MCF 10A (cell line): ENCODE measurements at regions of chr20 and their contacts with region 1.

Region 1: DNA sequence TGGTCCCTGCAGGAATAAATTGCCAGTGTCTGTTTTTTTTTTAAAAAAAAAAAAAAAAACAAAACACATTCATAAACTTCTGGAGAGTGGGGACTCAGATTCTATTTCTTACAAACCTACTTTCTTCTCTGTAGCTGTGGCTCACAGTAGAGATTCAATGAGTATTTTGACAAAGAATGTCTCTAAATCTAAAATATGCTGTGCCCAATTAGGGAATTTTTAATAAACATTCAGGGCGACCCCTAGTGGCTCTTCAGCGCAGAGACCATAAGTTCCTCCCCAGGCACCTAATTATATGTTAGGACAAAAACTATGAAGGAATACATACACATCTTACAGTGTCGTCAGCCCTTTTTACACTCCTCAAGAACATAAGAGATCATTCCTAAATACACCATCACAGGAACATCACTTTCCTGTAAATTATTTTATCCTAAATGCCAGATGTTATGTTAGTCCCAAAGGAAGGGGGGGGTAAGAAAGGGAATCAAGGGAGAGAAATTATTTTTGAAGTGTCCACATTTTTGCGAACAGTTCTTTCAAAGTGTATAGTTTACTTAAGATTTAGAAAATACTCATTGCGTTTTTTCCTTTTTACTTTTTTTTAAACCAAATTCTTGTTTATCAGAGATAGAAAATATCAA is 21.8 kb upstream of the NAA20 start:
- DNase-seq: peak; percentile 70
- H3K4me3 Mint-ChIP-seq: no peak overlapping the region
- H3K27ac Mint-ChIP-seq: peak overlapping the region; percentile 86
- H3K4me1 Mint-ChIP-seq: peaks cover 28% of the 10 kb centered on the region
- H3K27me3 Mint-ChIP-seq: no peaks in the 10 kb centered on the region
- CTCF ChIP-seq: peak; percentile 78

Region 2: GRCh38 chr20:19815553-19815991 is 179.8 kb before region 1 on chr20:
- CTCF ChIA-PET with region 1: interaction called, 7 read pairs
- POLR2A ChIA-PET with region 1: interaction called, 23 read pairs
- intact Hi-C with region 1: no loop called
- DNase-seq: peak; percentile 95
- H3K4me3 Mint-ChIP-seq: peak overlapping the region; percentile 44
- H3K27ac Mint-ChIP-seq: peak overlapping the region; percentile 90
- H3K4me1 Mint-ChIP-seq: peaks cover 20% of the 10 kb centered on the region
- H3K27me3 Mint-ChIP-seq: no peaks in the 10 kb centered on the region
- CTCF ChIP-seq: no peak

Region 3: GRCh38 chr20:19913927-19914614 is 81.3 kb before region 1 on chr20:
- CTCF ChIA-PET with region 1: interaction called, 9 read pairs
- POLR2A ChIA-PET with region 1: interaction called, 17 read pairs
- intact Hi-C with region 1: loop called (anchors 5 kb)
- DNase-seq: peak; percentile 94
- H3K4me3 Mint-ChIP-seq: no peak overlapping the region
- H3K27ac Mint-ChIP-seq: peak overlapping the region; percentile 82
- H3K4me1 Mint-ChIP-seq: peaks cover 46% of the 10 kb centered on the region
- H3K27me3 Mint-ChIP-seq: no peaks in the 10 kb centered on the region
- CTCF ChIP-seq: no peak

Region 4: DNA sequence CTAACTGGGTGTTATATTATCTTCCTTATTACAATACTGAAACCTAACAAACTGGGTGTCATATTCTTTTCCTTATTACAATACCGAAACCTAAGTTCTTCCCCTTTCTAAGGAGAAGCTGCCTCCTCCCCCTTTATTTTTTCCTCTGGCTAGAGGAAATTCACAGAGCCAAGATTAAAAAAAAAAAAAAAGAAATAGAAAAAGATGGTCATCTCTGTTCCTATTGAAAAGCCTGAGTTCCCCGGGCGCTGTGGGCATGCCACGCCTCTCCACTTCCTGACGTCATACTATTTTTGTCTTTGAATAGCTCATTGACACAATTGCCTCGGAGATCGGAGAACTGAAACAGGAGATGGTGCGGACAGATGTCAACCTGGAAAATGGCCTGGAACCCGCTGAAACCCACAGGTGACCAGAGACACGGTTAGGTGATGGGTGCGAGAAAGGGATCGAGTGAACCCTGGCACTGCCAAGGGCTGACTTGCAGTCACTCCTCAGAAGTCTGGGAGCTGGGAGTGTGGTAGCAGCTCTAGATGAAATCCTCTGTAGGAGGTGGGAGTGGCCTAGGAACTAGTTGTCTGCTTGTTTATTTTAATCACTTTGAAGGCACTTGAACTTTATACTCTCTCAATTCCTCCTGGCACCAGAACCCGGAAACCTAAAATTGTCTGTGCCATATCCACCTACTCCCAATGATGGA is 60.4 kb before region 1 on chr20:
- CTCF ChIA-PET with region 1: interaction called, 14 read pairs
- POLR2A ChIA-PET with region 1: interaction called, 41 read pairs
- intact Hi-C with region 1: loop called (anchors 2 kb)
- DNase-seq: peak; percentile 70
- H3K4me3 Mint-ChIP-seq: peak overlapping the region; percentile 69
- H3K27ac Mint-ChIP-seq: peak overlapping the region; percentile 71
- H3K4me1 Mint-ChIP-seq: peaks cover 15% of the 10 kb centered on the region
- H3K27me3 Mint-ChIP-seq: no peaks in the 10 kb centered on the region
- CTCF ChIP-seq: no peak

Region 5: GRCh38 chr20:19964289-19965263 is 30.8 kb before region 1 on chr20:
- CTCF ChIA-PET with region 1: interaction called, 6 read pairs
- POLR2A ChIA-PET with region 1: interaction called, 22 read pairs
- intact Hi-C with region 1: no loop called
- DNase-seq: peak; percentile 80
- H3K4me3 Mint-ChIP-seq: no peak overlapping the region
- H3K27ac Mint-ChIP-seq: peak overlapping the region; percentile 87
- H3K4me1 Mint-ChIP-seq: peaks cover 15% of the 10 kb centered on the region
- H3K27me3 Mint-ChIP-seq: no peaks in the 10 kb centered on the region
- CTCF ChIP-seq: no peak

Region 6: DNA sequence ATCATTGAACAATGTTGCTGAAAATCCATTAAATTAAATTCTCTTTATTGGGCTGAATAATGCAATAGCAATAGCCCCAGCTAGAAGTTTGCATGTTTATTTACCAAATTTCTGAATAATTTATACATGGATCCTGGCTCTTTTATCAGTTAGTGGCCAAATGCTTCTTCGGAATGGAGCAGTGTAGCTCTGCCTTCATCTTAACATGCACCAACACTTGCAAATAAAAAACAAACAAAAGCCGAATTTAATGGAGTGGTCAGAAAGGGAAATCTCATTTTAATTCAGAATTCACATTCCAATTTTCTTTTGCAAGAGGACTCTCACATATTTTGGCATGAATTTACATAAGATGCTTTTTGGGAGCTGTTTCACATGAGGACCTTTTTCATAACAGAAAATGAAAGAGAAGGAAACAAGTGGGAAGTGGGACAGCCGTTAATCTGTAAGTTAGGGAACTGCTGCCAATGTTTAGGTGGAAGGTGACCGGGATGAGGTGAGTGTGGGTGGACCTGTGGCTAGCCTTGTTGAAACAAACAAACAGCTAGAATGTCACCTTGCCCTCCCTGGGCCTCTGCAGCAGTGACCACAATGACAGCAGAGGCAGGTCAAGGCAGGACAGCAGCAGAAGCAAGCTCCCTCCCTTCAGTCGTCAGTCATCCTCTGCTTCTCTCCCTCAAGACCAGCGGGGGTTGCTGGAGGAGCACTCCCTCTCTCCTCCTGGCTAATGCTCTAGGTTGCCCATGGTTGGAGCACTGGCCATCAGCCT is 445.7 kb after region 1 on chr20:
- CTCF ChIA-PET with region 1: no interaction called
- POLR2A ChIA-PET with region 1: no interaction called
- intact Hi-C with region 1: no loop called
- DNase-seq: no peak
- H3K4me3 Mint-ChIP-seq: no peak overlapping the region
- H3K27ac Mint-ChIP-seq: no peak overlapping the region
- H3K4me1 Mint-ChIP-seq: no peaks in the 10 kb centered on the region
- H3K27me3 Mint-ChIP-seq: no peaks in the 10 kb centered on the region
- CTCF ChIP-seq: no peak